ENCODE measurements at regions of chr7 and their contacts with region 1.

Region 1: DNA sequence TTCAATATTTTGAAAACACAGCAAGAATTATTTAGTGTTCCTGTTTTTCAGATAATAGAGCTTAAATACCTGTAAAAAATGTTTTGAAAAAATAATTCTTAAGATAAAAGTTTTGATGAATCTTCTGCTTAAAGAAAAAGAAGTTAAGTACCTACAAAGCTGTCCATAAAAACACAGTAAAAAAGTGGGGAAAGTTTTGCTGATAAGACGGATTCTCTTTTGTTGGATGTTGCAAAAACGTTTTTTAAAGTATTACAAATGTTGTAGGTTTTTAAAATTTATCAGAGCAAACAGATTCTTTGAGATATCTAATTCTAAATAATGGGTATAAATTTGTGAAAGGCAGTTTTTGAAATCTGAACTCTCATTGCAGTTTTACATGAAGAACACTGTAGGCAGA is 12.2 kb downstream of the DMTF1 start:
- DNase-seq: no peak
- ATAC-seq: no peak
- H3K4me3 ChIP-seq: no peak overlapping the region
- H3K27ac ChIP-seq: no peak overlapping the region
- H3K4me1 ChIP-seq: no peaks in the 10 kb centered on the region
- H3K27me3 ChIP-seq: no peaks in the 10 kb centered on the region

Region 2: GRCh38 chr7:87219545-87220025 is 55.2 kb after region 1 on chr7 and contains the start of gene TMEM243:
- intact Hi-C with region 1: loop called in 3 of 4 experiments (anchors 10 kb)
- DNase-seq: peak; percentile 84 to 94 (median 93)
- ATAC-seq: peak; percentile 91 to 94
- H3K4me3 ChIP-seq: peak within 1 kb of the TSS; percentile 83
- H3K27ac ChIP-seq: peak within 1 kb of the TSS; percentile 79
- H3K4me1 ChIP-seq: peaks cover 2% of the 10 kb centered on the region
- H3K27me3 ChIP-seq: no peaks in the 10 kb centered on the region
- total RNA-seq, gene TMEM243: 7.1 to 10.8 (median 8.7) TPM

Region 3: DNA sequence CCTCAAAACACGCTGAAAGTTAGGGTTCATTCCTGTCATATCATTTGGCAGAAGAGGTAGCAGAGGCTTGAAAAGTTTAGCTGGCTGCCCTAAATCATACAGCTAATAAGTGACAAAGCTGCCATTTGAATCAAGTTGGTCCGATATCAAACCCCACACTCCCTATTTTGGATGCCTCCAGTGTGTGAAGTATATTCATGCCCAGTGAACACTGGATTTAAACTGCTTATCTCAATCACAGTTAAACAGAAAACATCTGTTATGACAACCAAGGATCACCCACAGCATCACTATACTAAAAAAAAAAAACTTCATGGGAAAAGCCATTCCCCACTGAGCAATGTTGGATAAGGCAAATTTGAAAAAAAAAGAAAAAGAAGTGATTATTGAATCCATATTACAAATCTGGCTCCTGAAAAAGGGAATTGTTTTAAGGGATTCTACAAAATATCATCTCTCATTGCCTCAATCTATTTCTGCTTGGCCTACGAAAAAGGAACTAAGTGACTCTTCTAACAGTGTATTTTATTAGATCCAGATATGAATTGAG is 388.0 kb after region 1 on chr7:
- intact Hi-C with region 1: no loop called
- DNase-seq: no peak
- ATAC-seq: peak; percentile 55 to 68
- H3K4me3 ChIP-seq: no peak overlapping the region
- H3K27ac ChIP-seq: no peak overlapping the region
- H3K4me1 ChIP-seq: no peaks in the 10 kb centered on the region
- H3K27me3 ChIP-seq: no peaks in the 10 kb centered on the region